Activated T-helper 2 cell treated with anti-CD3 and anti-CD28 coated beads, Interferon-gamma antibody, Interleukin-2, Interleukin-4, amounts not matched to agents 10 μg/mL and 5 μg/mL and 100 μg/mL, durations not matched to agents 14 hours and 24 hours and 36 hours (primary cell): ENCODE measurements at regions of chr14 and their contacts with region 1.

Region 1: GRCh38 chr14:55026793-55027561 is at the starts of genes SOCS4 and WDHD1:
- DNase-seq: peak; percentile 98
- H3K4me3 Mint-ChIP-seq: peak within 1 kb of the TSS; percentile 94
- H3K27ac Mint-ChIP-seq: peak within 1 kb of the TSS; percentile 90
- H3K4me1 Mint-ChIP-seq: peaks cover 48% of the 10 kb centered on the region
- H3K27me3 Mint-ChIP-seq: no peaks in the 10 kb centered on the region
- total RNA-seq, gene SOCS4: 35.1 and 37.4 TPM in 2 replicates
- total RNA-seq, gene WDHD1: 50.3 and 51.3 TPM in 2 replicates

Region 2: DNA sequence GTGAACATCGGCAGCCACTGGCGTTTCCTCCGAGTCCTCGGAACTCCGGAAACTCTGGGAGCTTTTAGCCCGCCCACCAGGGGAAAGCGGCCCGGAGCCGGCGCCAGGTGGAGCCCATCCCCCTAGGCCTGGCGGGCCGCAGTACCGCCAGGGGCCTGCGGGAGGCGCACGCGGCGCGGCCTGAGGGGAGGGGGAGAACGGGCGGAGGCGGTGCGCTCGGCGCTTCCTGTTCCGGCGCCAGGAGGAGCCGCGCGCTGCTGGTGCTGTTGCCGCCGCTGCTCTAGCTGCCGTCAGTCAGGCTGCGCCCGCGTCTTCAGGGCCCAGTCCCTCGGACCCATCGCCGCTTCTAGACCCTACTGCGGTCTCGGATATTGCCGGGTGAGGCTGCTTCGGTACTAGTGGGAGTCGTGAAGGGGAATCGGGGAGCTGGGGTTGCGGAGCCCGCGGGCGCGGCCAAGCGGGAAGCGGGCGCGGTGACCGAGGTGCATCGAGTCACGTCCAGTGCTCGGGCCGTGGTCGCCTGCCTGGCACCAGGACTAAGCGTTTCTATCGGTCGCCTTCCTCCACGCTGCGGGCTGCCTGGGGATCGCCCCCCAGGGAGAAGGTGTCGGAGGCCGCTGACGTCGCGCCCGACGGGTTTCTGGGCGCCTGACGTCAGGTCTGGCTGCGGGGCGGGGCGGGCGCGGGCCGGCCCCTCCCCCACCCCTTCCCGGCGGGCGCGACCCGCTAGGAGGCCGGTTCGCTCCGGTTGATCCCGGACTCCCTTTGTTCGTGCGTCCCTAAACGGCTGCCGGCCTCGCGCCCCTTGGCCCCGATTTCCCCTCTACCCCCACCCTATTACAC is 24.7 kb after region 1 on chr14 and contains the start of gene MAPK1IP1L:
- intact Hi-C with region 1: loop called (anchors 1 kb)
- DNase-seq: peak; percentile 89
- H3K4me3 Mint-ChIP-seq: peak within 1 kb of the TSS; percentile 86
- H3K27ac Mint-ChIP-seq: peak within 1 kb of the TSS; percentile 92
- H3K4me1 Mint-ChIP-seq: peaks cover 35% of the 10 kb centered on the region
- H3K27me3 Mint-ChIP-seq: no peaks in the 10 kb centered on the region
- total RNA-seq, gene MAPK1IP1L: 145 and 148 TPM in 2 replicates

Region 3: GRCh38 chr14:55191203-55192053 is 164.5 kb after region 1 on chr14 and contains the start of gene DLGAP5:
- intact Hi-C with region 1: no loop called
- DNase-seq: peak; percentile 93
- H3K4me3 Mint-ChIP-seq: peak within 1 kb of the TSS; percentile 95
- H3K27ac Mint-ChIP-seq: peak within 1 kb of the TSS; percentile 88
- H3K4me1 Mint-ChIP-seq: peaks cover 35% of the 10 kb centered on the region
- H3K27me3 Mint-ChIP-seq: peaks cover 4% of the 10 kb centered on the region
- total RNA-seq, gene DLGAP5: 41.9 and 46.0 TPM in 2 replicates